Activated naive CD4-positive, alpha-beta T cell treated with anti-CD3 and anti-CD28 coated beads, Interleukin-2, amount 10 ng/mL, durations not matched to agents 7 days and 5 days (primary cell): ENCODE measurements at regions of chr11 and their contacts with region 1.

Region 1: DNA sequence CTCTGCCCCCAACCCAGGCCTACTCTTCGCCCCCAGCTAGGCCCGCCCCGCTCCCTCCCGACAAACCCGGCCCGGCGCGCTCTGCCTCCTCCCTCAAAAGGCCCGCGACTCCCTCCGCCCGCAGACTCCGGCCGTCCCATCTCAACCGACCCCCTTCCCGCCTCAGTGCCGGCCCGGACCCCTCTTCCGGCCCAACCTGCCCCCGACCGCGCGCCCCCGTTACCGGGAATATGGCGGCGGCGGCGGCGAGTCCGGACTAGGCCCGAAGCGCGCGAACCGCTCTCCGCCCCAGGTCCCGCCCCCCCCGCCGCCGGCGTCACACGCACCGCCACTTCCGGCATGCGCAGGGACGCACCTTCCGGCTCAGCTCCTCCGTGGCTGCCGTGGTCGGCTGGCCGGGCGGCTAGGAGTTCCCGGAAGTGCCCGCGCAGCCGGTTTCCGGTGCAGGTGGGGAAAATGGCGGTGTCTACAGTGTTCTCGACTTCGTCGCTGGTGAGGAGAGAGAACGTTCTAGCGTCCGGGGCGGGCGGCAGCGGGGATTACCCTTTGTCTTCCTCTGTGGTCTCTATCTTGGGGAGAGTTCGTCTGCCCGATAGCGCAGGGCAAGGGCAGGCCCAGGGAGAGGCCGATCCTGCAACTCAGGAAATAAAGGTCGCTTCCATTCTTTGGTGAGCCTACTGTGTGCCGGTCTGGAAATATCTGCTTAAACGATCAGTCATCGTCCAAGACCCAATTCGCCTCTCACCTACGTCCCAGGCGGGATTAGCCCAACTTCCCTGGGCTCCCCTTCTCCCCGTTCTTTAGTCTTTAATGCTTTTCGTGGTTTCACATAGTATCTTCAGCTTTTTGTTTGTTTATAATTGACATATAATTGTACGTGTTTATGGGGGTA is at the starts of genes CPSF7 and SDHAF2:
- DNase-seq: peak; percentile 98
- H3K4me3 Mint-ChIP-seq: peak within 1 kb of the TSS; percentile 89
- H3K27ac Mint-ChIP-seq: peak within 1 kb of the TSS; percentile 97
- H3K4me1 Mint-ChIP-seq: peaks cover 64% of the 10 kb centered on the region
- H3K27me3 Mint-ChIP-seq: no peaks in the 10 kb centered on the region

Region 2: GRCh38 chr11:61392981-61393595 is 36.8 kb before region 1 on chr11:
- CTCF ChIA-PET with region 1: interaction called, 11 read pairs
- DNase-seq: peak; percentile 34
- H3K4me3 Mint-ChIP-seq: peak overlapping the region; percentile 85
- H3K27ac Mint-ChIP-seq: peak overlapping the region; percentile 87
- H3K4me1 Mint-ChIP-seq: peaks cover 26% of the 10 kb centered on the region
- H3K27me3 Mint-ChIP-seq: no peaks in the 10 kb centered on the region

Region 3: GRCh38 chr11:61417670-61418069 is 12.3 kb before region 1 on chr11:
- CTCF ChIA-PET with region 1: interaction called, 11 read pairs
- DNase-seq: no peak
- H3K4me3 Mint-ChIP-seq: no peak overlapping the region
- H3K27ac Mint-ChIP-seq: no peak overlapping the region
- H3K4me1 Mint-ChIP-seq: peaks cover 49% of the 10 kb centered on the region
- H3K27me3 Mint-ChIP-seq: no peaks in the 10 kb centered on the region

Region 4: DNA sequence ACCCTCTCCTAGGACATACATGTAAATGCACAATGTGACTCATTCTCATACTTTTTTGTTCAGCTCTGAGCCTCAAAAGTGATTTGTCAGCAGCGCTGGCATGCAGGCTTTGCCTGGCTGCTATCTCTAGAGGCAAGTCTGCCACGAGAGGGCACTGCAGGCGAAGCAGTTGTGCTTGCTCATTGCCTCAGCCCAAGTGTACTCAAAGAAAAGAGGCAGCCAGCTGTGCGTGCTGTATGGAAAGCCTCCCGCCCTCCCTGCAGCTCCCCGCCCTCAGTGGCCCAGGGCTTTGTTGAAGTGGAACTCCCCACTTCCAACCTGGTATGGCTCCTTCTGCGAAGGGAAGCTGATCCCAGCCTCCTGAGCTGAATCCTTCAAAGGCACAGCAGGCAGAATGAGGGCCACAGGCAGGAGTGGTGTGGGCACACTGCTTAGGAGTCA is 16.3 kb after region 1 on chr11:
- CTCF ChIA-PET with region 1: interaction called, 42 read pairs
- DNase-seq: peak; percentile 88
- H3K4me3 Mint-ChIP-seq: no peak overlapping the region
- H3K27ac Mint-ChIP-seq: no peak overlapping the region
- H3K4me1 Mint-ChIP-seq: peaks cover 4% of the 10 kb centered on the region
- H3K27me3 Mint-ChIP-seq: no peaks in the 10 kb centered on the region